ENCODE measurements at regions of chr10 and their contacts with region 1.

Region 1: DNA sequence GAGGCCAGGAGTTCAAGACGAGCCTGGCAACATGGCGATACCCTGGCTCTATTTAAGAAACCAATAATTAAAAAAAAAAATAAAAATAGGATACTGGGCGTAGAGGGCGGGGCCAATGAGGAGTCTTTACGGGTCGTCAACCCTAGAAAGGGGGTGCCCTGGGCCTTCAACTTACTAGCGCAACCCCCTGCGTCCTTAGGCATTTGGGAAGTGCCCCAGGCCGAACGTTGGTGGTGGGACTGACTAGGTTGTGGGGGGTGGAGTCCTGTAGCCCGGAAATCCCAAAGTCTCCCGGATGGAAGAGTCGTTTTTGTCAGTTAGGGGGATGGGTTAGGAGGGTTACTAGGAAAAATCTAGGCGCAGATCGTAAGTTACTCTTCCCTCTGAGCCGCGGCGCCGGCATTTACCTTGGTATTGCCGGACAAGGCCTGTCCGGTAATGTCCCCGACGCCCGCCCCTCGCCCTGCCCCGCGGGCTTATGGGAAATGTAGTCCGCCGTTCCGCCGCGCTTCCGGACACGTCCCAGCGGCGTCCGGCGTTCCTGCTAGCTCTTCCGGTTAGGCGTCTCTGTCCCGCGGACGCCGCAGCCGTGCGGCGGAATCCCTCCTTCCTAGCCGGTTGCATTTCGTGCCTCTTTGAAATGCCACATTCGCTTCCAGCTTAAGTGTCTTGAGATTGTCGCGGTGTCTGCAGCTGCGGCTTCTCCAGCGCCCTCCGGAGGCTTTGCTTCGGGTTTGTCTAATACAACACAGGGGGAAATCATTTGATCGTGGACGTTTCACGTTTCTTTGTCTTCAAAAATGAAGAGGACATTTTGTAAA is 1.3 kb upstream of the ACBD5 start:
- DNase-seq: peak; percentile 88
- H3K4me3 Mint-ChIP-seq: peak overlapping the region; percentile 92
- H3K27ac Mint-ChIP-seq: peak overlapping the region; percentile 99
- H3K4me1 Mint-ChIP-seq: peaks cover 32% of the 10 kb centered on the region
- H3K27me3 Mint-ChIP-seq: no peaks in the 10 kb centered on the region

Region 2: GRCh38 chr10:27252267-27253000 is 10.6 kb after region 1 on chr10:
- CTCF ChIA-PET with region 1: interaction called, 24 read pairs
- POLR2A ChIA-PET with region 1: no interaction called
- DNase-seq: peak; percentile 75
- H3K4me3 Mint-ChIP-seq: peak overlapping the region; percentile 72
- H3K27ac Mint-ChIP-seq: peak overlapping the region; percentile 84
- H3K4me1 Mint-ChIP-seq: peaks cover 17% of the 10 kb centered on the region
- H3K27me3 Mint-ChIP-seq: peaks cover 10% of the 10 kb centered on the region